ENCODE measurements at regions of chr12 and their contacts with region 1.

Region 1: GRCh38 chr12:3863756-3864329 is 9.4 kb downstream of the PARP11 start:
- DNase-seq: no peak
- H3K4me3 ChIP-seq: no peak overlapping the region
- H3K27ac ChIP-seq: no peak overlapping the region
- H3K4me1 ChIP-seq: no peaks in the 10 kb centered on the region
- H3K27me3 ChIP-seq: no peaks in the 10 kb centered on the region
- CTCF ChIP-seq: no peak

Region 2: DNA sequence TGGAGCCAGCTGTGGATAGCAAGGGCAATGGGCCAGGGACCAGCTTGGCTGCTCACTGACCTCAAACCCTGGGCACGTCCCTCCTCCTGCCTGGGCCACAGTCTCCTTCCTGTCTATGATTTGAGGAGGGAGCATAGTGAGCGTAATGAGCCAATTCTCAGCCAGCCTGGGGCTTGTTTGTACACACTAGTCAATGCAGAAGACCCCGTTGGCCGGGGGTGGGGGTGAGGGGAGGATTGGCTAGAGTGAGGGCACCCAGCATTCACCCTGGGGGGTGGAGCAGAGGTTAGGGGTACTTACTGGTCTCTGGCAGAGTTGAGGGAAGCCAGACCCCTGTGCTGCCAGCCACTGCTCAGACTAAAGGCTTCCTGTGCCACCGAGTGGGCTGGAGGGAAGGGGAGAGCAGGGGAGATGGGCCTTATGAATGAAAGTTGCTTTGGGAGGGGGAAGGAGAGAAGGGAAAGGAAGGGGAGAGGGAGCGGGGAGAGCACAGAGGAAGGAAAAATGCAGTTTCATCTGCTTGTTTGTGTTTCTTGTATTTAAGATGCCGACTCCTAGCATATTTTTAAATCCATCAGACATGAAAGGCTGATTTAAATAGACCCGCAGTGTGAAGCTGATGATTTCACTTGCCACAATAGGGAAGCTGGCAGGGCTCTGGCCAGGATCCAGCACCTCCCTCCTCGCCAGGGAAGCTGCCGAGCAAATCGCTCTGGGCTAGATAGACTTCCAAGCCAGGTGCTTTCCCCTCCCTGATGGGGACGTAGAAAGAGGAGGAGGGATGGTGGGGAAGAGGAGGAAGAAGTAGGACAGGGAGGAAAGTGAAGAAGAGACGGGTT is 258.9 kb before region 1 on chr12:
- CTCF ChIA-PET with region 1: no interaction called
- POLR2A ChIA-PET with region 1: no interaction called
- intact Hi-C with region 1: no loop called
- DNase-seq: no peak
- H3K4me3 ChIP-seq: no peak overlapping the region
- H3K27ac ChIP-seq: no peak overlapping the region
- H3K4me1 ChIP-seq: no peaks in the 10 kb centered on the region
- H3K27me3 ChIP-seq: peaks cover 98% of the 10 kb centered on the region
- CTCF ChIP-seq: no peak

Region 3: DNA sequence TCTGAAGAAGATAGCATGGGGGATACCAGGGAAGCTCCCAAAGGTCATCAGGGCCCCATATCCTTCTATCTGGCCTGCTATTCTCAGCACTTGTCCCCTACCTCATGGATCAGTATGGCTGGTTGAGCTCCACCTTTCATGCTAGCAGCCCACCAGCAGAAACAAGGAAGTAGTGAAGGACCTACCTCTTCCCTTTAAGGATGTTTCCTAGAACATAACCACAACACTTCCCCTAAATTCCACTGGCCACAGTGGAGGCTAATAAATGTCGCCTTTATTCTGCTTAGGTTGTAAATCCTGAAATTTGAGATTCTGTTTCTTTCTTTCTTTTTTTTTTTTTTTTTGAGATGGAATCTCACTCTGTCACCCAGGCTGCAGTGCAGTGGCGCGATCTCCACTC is 138.0 kb after region 1 on chr12:
- CTCF ChIA-PET with region 1: no interaction called
- POLR2A ChIA-PET with region 1: interaction called, 24 read pairs
- intact Hi-C with region 1: no loop called
- DNase-seq: no peak
- H3K4me3 ChIP-seq: no peak overlapping the region
- H3K27ac ChIP-seq: no peak overlapping the region
- H3K4me1 ChIP-seq: no peaks in the 10 kb centered on the region
- H3K27me3 ChIP-seq: peaks cover 42% of the 10 kb centered on the region
- CTCF ChIP-seq: no peak

Measured in PC-9 (cell line).